AG04450 (cell line): ENCODE measurements at regions of chr11 and their contacts with region 1.

Region 1: GRCh38 chr11:86608251-86608799 is 64.1 kb downstream of the ME3 start:
- DNase-seq: peak; percentile 57
- H3K4me3 ChIP-seq: no peak overlapping the region
- H3K27ac ChIP-seq: no peak overlapping the region
- H3K27me3 ChIP-seq: no peaks in the 10 kb centered on the region
- CTCF ChIP-seq: peak; percentile 94

Region 2: GRCh38 chr11:86483940-86484794 is 124.2 kb before region 1 on chr11:
- CTCF ChIA-PET with region 1: interaction called, 15 read pairs
- POLR2A ChIA-PET with region 1: interaction called, 3 read pairs
- DNase-seq: peak; percentile 96
- H3K4me3 ChIP-seq: no peak overlapping the region
- H3K27ac ChIP-seq: peak overlapping the region; percentile 58
- H3K27me3 ChIP-seq: no peaks in the 10 kb centered on the region
- CTCF ChIP-seq: no peak

Region 3: GRCh38 chr11:86592659-86593451 is 15.5 kb before region 1 on chr11:
- CTCF ChIA-PET with region 1: interaction called, 62 read pairs
- POLR2A ChIA-PET with region 1: interaction called, 4 read pairs
- DNase-seq: peak; percentile 38
- H3K4me3 ChIP-seq: no peak overlapping the region
- H3K27ac ChIP-seq: peak overlapping the region; percentile 66
- H3K27me3 ChIP-seq: no peaks in the 10 kb centered on the region
- CTCF ChIP-seq: no peak

Region 4: DNA sequence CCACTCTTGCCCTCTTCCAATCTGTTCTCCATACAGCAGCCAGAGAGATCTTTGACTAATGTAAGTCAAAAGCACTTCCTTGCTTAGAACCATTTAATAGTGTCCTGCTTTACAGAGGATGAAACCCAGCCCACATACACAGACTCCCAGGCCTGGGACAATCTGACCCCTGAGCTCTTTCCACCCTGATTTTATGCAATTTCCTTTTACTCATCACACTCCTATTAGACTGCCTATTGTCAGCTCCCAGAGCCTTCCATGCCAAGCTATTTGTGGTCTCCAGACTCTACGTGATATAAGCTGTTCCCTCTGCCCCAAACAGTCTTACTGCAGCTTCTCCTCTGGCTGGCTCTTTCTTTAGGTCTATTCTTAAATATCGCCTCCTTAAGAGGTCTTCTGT is 36.0 kb after region 1 on chr11:
- CTCF ChIA-PET with region 1: interaction called, 24 read pairs
- POLR2A ChIA-PET with region 1: no interaction called
- DNase-seq: no peak
- H3K4me3 ChIP-seq: no peak overlapping the region
- H3K27ac ChIP-seq: no peak overlapping the region
- H3K27me3 ChIP-seq: no peaks in the 10 kb centered on the region
- CTCF ChIP-seq: no peak

Region 5: DNA sequence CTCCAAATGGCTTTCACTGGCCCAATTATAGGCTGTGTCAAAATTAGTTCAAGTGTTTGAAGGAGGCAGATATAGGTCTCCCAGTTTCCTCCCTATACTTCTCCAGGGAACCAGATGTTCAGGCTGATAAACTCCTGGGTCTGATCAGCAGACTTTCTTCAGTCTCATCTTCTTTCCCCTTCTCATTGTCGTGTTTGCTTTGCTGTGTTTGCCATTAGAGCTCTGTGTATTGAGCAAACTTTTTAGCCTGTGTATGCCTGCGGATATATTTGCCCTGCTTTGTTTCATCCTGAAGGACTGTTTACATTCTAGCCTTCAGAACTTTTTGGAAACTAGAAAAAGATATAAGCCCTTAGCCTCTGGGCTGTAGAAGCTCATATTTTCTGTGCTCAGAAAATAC is 98.0 kb after region 1 on chr11:
- CTCF ChIA-PET with region 1: no interaction called
- POLR2A ChIA-PET with region 1: no interaction called
- DNase-seq: no peak
- H3K4me3 ChIP-seq: no peak overlapping the region
- H3K27ac ChIP-seq: no peak overlapping the region
- H3K27me3 ChIP-seq: no peaks in the 10 kb centered on the region
- CTCF ChIP-seq: no peak

Region 6: GRCh38 chr11:86784241-86784681 is 175.9 kb after region 1 on chr11:
- CTCF ChIA-PET with region 1: interaction called, 10 read pairs
- POLR2A ChIA-PET with region 1: no interaction called
- DNase-seq: no peak
- H3K4me3 ChIP-seq: no peak overlapping the region
- H3K27ac ChIP-seq: no peak overlapping the region
- H3K27me3 ChIP-seq: no peaks in the 10 kb centered on the region
- CTCF ChIP-seq: no peak

Region 7: GRCh38 chr11:86869966-86870570 is 261.7 kb after region 1 on chr11:
- CTCF ChIA-PET with region 1: interaction called, 15 read pairs
- POLR2A ChIA-PET with region 1: no interaction called
- DNase-seq: peak; percentile 27
- H3K4me3 ChIP-seq: no peak overlapping the region
- H3K27ac ChIP-seq: no peak overlapping the region
- H3K27me3 ChIP-seq: no peaks in the 10 kb centered on the region
- CTCF ChIP-seq: peak; percentile 87